Activated CD8-positive, alpha-beta T cell treated with anti-CD3 and anti-CD28 coated beads for 36 hours (primary cell): ENCODE measurements at regions of chr2 and their contacts with region 1.

Region 1: DNA sequence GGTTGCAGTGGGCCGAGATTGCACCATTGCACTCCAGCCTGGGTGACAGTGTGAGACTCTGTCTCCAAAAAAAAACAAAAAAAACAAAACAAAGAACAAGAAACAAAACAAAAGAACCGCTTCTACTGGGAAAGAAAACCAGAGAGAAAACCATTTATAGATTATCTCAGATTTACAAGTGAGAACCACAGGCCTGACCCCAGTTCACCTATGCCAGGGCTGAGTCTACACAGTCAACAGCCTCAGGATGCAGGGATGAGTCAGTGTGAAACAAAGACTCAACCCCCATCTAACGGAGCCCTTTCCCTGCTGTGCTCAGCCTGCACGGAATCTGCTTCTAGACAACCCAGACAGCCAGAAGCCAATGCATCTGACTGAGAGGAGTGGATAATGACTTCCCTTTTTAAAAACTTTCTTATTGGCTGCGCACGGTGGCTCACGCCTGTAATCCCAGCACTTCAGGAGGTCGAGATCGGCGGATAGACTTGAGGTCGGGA is 25.5 kb upstream of the YWHAQ start:
- DNase-seq: peak; percentile 87
- ATAC-seq: peak; percentile 81
- H3K4me3 Mint-ChIP-seq: no peak overlapping the region
- H3K27ac Mint-ChIP-seq: peak overlapping the region; percentile 85
- H3K4me1 Mint-ChIP-seq: peaks cover 26% of the 10 kb centered on the region
- H3K27me3 Mint-ChIP-seq: no peaks in the 10 kb centered on the region
- CTCF ChIP-seq: no peak

Region 2: GRCh38 chr2:9356292-9356691 is 300.0 kb before region 1 on chr2:
- CTCF ChIA-PET with region 1: no interaction called
- POLR2A ChIA-PET with region 1: no interaction called
- intact Hi-C with region 1: no loop called
- DNase-seq: no peak
- ATAC-seq: no peak
- H3K4me3 Mint-ChIP-seq: no peak overlapping the region
- H3K27ac Mint-ChIP-seq: no peak overlapping the region
- H3K4me1 Mint-ChIP-seq: no peaks in the 10 kb centered on the region
- H3K27me3 Mint-ChIP-seq: peaks cover 5% of the 10 kb centered on the region
- CTCF ChIP-seq: no peak

Region 3: GRCh38 chr2:9668722-9669340 is 12.5 kb after region 1 on chr2:
- CTCF ChIA-PET with region 1: no interaction called
- POLR2A ChIA-PET with region 1: interaction called, 10 read pairs
- intact Hi-C with region 1: no loop called
- DNase-seq: no peak
- ATAC-seq: no peak
- H3K4me3 Mint-ChIP-seq: no peak overlapping the region
- H3K27ac Mint-ChIP-seq: no peak overlapping the region
- H3K4me1 Mint-ChIP-seq: peaks cover 6% of the 10 kb centered on the region
- H3K27me3 Mint-ChIP-seq: peaks cover 2% of the 10 kb centered on the region
- CTCF ChIP-seq: no peak

Region 4: DNA sequence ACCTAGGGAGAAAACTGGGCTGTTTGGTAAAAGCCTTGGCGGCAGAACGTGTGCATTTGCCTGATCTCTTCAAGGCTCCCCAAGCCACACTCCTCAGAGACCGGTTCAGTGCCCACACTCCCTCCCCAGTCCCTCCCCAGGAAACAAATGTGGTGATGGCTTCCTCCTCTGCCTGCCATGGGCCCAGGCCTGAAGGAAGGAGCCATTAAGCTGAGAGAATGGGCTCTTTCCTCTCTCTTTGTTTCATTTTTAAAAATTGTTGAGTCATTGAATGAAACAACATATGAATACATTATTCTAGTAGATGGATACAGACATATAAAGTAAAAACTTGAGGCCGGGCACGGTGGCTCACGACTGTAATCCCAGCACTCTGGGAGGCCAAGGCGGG is 25.1 kb after region 1 on chr2:
- CTCF ChIA-PET with region 1: no interaction called
- POLR2A ChIA-PET with region 1: no interaction called
- intact Hi-C with region 1: no loop called
- DNase-seq: peak; percentile 22
- ATAC-seq: peak; percentile 53
- H3K4me3 Mint-ChIP-seq: no peak overlapping the region
- H3K27ac Mint-ChIP-seq: peak overlapping the region; percentile 57
- H3K4me1 Mint-ChIP-seq: peaks cover 6% of the 10 kb centered on the region
- H3K27me3 Mint-ChIP-seq: no peaks in the 10 kb centered on the region
- CTCF ChIP-seq: no peak

Region 5: DNA sequence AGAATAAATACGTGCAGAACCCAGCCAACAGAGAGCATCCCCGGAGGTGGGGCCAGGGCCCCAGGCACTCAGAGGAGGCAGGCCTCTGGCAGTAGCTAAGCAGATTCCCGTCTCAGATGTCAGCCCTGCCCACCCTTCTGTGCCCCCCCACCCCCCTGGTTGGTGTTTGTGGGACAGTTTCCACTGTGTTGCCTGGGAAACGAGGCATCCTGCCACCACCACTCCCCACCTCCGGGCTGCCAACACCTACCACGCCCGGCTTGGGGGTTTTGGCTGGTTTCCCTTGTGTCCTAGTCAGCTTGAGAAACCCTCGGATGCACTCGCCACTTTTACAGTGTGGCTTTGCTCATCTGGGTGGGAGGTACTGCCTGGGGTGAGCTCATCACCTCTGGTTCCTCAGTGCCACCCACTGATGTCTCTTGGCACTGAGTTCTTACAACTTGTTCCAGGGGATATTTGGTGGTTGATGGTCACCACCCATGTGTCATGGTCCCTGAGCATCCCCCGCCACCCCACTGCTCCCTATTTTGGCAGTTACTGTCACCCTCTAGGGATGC is 46.8 kb after region 1 on chr2:
- CTCF ChIA-PET with region 1: interaction called, 3 read pairs
- POLR2A ChIA-PET with region 1: interaction called, 4 read pairs
- intact Hi-C with region 1: loop called (anchors 5 kb)
- DNase-seq: peak; percentile 96
- ATAC-seq: peak; percentile 94
- H3K4me3 Mint-ChIP-seq: no peak overlapping the region
- H3K27ac Mint-ChIP-seq: peak overlapping the region; percentile 7
- H3K4me1 Mint-ChIP-seq: peaks cover 30% of the 10 kb centered on the region
- H3K27me3 Mint-ChIP-seq: peaks cover 2% of the 10 kb centered on the region
- CTCF ChIP-seq: no peak

Region 6: GRCh38 chr2:9778012-9778411 is 121.7 kb after region 1 on chr2:
- CTCF ChIA-PET with region 1: no interaction called
- POLR2A ChIA-PET with region 1: no interaction called
- intact Hi-C with region 1: loop called (anchors 5 kb)
- DNase-seq: no peak
- ATAC-seq: no peak
- H3K4me3 Mint-ChIP-seq: no peak overlapping the region
- H3K27ac Mint-ChIP-seq: no peak overlapping the region
- H3K4me1 Mint-ChIP-seq: peaks cover 34% of the 10 kb centered on the region
- H3K27me3 Mint-ChIP-seq: no peaks in the 10 kb centered on the region
- CTCF ChIP-seq: no peak